Naive thymus-derived CD4-positive, alpha-beta T cell (primary cell): ENCODE measurements at regions of chr15 and their contacts with region 1.

Region 1: GRCh38 chr15:74402873-74403587 is 30.7 kb downstream of the SEMA7A start:
- DNase-seq: peak in 6 of 9 donors; percentile 26 to 80 (median 32)
- ATAC-seq: peak; percentile 75
- H3K4me3 ChIP-seq: peak overlapping the region; percentile 10
- H3K4me3 Mint-ChIP-seq: peak overlapping the region in 9 of 10 donors; percentile 19 to 67 (median 49)
- H3K27ac ChIP-seq: no peak overlapping the region
- H3K27ac Mint-ChIP-seq: peak overlapping the region in 7 of 9 donors; percentile 2 to 85 (median 49)
- H3K4me1 ChIP-seq: peaks cover 43 to 57% of the 10 kb centered on the region in 2 donors
- H3K4me1 Mint-ChIP-seq: peaks cover 40 to 70% (median 53%) of the 10 kb centered on the region in 7 donors
- H3K27me3 ChIP-seq: no peaks in the 10 kb centered on the region
- H3K27me3 Mint-ChIP-seq: no peaks in the 10 kb centered on the region

Region 2: GRCh38 chr15:74433592-74434262 is 30.7 kb after region 1 on chr15 and contains the start of gene SEMA7A:
- CTCF ChIA-PET with region 1: interaction called, 5 read pairs
- POLR2A ChIA-PET with region 1: no interaction called
- intact Hi-C with region 1: loop called (anchors 1 to 5 kb)
- DNase-seq: peak; percentile 32 to 90 (median 53)
- ATAC-seq: peak; percentile 87
- H3K4me3 ChIP-seq: peak within 1 kb of the TSS; percentile 50
- H3K4me3 Mint-ChIP-seq: peak within 1 kb of the TSS; percentile 72 to 88 (median 78)
- H3K27ac ChIP-seq: no peak within 1 kb of the TSS
- H3K27ac Mint-ChIP-seq: peak within 1 kb of the TSS in 4 of 9 donors; percentile 65 to 89 (median 72)
- H3K4me1 ChIP-seq: peaks cover 6 to 35% of the 10 kb centered on the region in 2 donors
- H3K4me1 Mint-ChIP-seq: peaks cover 7 to 57% (median 16%) of the 10 kb centered on the region in 7 donors
- H3K27me3 ChIP-seq: no peaks in the 10 kb centered on the region
- H3K27me3 Mint-ChIP-seq: peaks cover 0 to 3% (median 0%) of the 10 kb centered on the region in 5 donors
- total RNA-seq, gene SEMA7A: 1.6 to 15.7 (median 5.0) TPM

Region 3: GRCh38 chr15:74438721-74439316 is 35.8 kb after region 1 on chr15:
- CTCF ChIA-PET with region 1: interaction called, 5 read pairs
- POLR2A ChIA-PET with region 1: no interaction called
- intact Hi-C with region 1: loop called in 1 of 2 experiments (anchors 5 kb)
- DNase-seq: peak; percentile 52 to 76 (median 72)
- ATAC-seq: peak; percentile 84
- H3K4me3 ChIP-seq: no peak overlapping the region
- H3K4me3 Mint-ChIP-seq: no peak overlapping the region
- H3K27ac ChIP-seq: no peak overlapping the region
- H3K27ac Mint-ChIP-seq: peak overlapping the region in 3 of 9 donors; percentile 11 to 55 (median 43)
- H3K4me1 ChIP-seq: peaks cover 6 to 11% of the 10 kb centered on the region in 2 donors
- H3K4me1 Mint-ChIP-seq: peaks cover 7 to 30% (median 15%) of the 10 kb centered on the region in 7 donors
- H3K27me3 ChIP-seq: no peaks in the 10 kb centered on the region
- H3K27me3 Mint-ChIP-seq: no peaks in the 10 kb centered on the region